Activated naive CD4-positive, alpha-beta T cell treated with anti-CD3 and anti-CD28 coated beads for 36 hours (primary cell): ENCODE measurements at regions of chr7 and their contacts with region 1.

Region 1: GRCh38 chr7:143240291-143241168 is 18.7 kb downstream of the TAS2R40 start:
- DNase-seq: peak; percentile 85
- H3K4me3 Mint-ChIP-seq: no peak overlapping the region
- H3K27ac Mint-ChIP-seq: no peak overlapping the region
- H3K4me1 Mint-ChIP-seq: peaks cover 22% of the 10 kb centered on the region
- H3K27me3 Mint-ChIP-seq: peaks cover 1% of the 10 kb centered on the region

Region 2: GRCh38 chr7:142703655-142704305 is 536.8 kb before region 1 on chr7:
- CTCF ChIA-PET with region 1: no interaction called
- intact Hi-C with region 1: no loop called
- DNase-seq: no peak
- H3K4me3 Mint-ChIP-seq: no peak overlapping the region
- H3K27ac Mint-ChIP-seq: no peak overlapping the region
- H3K4me1 Mint-ChIP-seq: peaks cover 20% of the 10 kb centered on the region
- H3K27me3 Mint-ChIP-seq: no peaks in the 10 kb centered on the region

Region 3: DNA sequence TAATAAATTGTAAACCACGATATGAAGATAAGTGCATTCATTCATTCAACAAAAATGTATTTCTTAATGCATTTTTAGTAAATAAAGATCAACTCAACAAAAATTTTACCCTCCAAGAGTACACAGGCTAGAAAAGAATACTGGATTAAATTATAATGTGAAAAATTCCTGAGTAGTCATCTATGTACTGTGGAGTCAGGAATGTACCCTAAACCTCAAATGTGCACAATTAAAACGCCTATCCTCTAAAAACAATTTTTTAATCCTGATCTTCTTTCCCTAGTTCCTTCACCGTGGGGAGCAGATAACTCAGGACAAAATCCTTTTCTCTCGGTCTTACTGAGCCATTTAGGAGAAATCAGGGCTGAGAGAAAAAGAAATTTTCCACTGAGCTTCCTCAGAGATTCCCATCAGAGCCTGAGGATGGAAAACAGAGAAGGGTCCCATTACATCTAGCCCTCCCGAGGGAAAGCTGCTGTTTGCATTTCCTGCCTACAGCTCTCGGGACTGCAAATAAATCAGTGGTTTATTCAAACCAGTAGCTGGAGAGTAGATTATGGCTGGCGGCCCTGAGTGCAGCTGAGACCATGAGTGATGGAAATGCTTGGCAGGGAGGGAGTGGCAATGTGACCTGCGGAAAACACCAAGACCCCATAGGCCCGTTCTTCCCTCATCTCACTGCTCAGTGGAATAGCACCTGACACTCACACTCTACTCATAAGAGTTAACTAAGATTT is 11.3 kb before region 1 on chr7:
- CTCF ChIA-PET with region 1: interaction called, 10 read pairs
- intact Hi-C with region 1: no loop called
- DNase-seq: no peak
- H3K4me3 Mint-ChIP-seq: no peak overlapping the region
- H3K27ac Mint-ChIP-seq: no peak overlapping the region
- H3K4me1 Mint-ChIP-seq: no peaks in the 10 kb centered on the region
- H3K27me3 Mint-ChIP-seq: no peaks in the 10 kb centered on the region

Region 4: GRCh38 chr7:143279186-143280098 is 38.9 kb after region 1 on chr7:
- CTCF ChIA-PET with region 1: interaction called, 23 read pairs
- intact Hi-C with region 1: loop called (anchors 1 kb)
- DNase-seq: no peak
- H3K4me3 Mint-ChIP-seq: peak overlapping the region; percentile 77
- H3K27ac Mint-ChIP-seq: peak overlapping the region; percentile 94
- H3K4me1 Mint-ChIP-seq: peaks cover 41% of the 10 kb centered on the region
- H3K27me3 Mint-ChIP-seq: no peaks in the 10 kb centered on the region

Region 5: DNA sequence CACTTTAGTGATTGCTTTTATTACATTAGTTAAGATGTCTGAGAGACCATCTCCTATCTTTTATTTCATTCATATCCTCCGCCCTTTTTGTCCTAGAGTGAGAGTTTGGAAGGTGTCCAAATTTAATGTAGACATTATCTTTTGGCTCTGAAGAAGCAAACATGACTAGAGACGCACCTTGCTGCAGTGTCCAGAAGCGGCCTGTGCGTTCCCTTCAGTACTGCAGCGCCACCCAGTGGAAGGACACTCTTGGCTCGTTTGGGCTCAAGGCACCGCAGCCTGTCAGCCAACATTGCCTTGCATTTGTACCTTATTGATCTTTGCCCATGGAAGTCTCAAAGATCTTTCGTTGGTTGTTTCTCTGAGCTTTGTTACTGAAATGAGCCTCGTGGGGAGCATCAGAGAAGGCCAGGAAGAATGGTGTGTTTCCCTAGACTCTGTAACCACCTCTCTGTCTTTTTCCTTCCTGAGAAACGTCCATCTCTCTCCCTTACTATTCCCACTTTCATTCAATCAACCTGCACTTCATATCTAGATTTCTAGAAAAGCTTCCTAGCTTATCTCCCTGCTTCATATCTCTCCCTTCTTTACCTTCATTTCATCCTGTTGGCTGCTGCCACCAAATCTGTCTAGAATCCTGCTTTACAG is 65.0 kb after region 1 on chr7:
- CTCF ChIA-PET with region 1: interaction called, 137 read pairs
- intact Hi-C with region 1: loop called (anchors 1 kb)
- DNase-seq: peak; percentile 83
- H3K4me3 Mint-ChIP-seq: no peak overlapping the region
- H3K27ac Mint-ChIP-seq: peak overlapping the region; percentile 71
- H3K4me1 Mint-ChIP-seq: peaks cover 41% of the 10 kb centered on the region
- H3K27me3 Mint-ChIP-seq: no peaks in the 10 kb centered on the region

Region 6: GRCh38 chr7:143372070-143372469 is 131.5 kb after region 1 on chr7:
- CTCF ChIA-PET with region 1: interaction called, 21 read pairs
- intact Hi-C with region 1: loop called (anchors 1 kb)
- DNase-seq: peak; percentile 90
- H3K4me3 Mint-ChIP-seq: no peak overlapping the region
- H3K27ac Mint-ChIP-seq: peak overlapping the region; percentile 24
- H3K4me1 Mint-ChIP-seq: peaks cover 41% of the 10 kb centered on the region
- H3K27me3 Mint-ChIP-seq: no peaks in the 10 kb centered on the region

Region 7: DNA sequence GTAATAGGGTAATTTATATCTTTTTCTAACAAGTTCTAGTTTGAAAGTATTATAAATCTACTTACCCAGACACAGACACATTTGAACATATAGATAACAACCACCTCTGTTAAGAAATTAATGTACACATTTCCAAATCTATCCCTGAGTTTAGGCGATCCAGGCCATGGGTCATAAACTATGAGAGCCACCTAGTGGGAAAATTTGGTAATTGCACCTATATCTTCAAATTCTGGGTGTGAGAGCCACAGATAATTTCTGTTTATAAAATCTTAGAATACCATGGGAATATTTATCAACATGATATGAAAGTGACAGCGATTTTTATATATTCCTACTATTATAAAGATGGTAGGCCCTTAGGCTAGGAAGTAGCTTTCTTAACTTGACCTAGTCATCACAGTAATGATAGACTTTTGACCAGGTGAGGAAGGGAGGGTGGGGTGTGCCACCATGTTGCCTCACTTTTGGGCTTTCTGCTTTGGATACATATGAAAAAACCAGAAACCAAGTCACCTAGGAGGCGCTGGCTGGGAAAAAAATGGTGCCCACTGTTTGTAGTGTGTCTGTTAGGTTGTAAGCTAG is 176.1 kb after region 1 on chr7:
- CTCF ChIA-PET with region 1: interaction called, 79 read pairs
- intact Hi-C with region 1: loop called (anchors 2 kb)
- DNase-seq: no peak
- H3K4me3 Mint-ChIP-seq: no peak overlapping the region
- H3K27ac Mint-ChIP-seq: no peak overlapping the region
- H3K4me1 Mint-ChIP-seq: peaks cover 22% of the 10 kb centered on the region
- H3K27me3 Mint-ChIP-seq: no peaks in the 10 kb centered on the region